Left colon (tissue), 2 donors: ENCODE measurements at regions of chr11 and their contacts with region 1.

Region 1: GRCh38 chr11:127395034-127395433 is 394.5 kb upstream of the KIRREL3 start:
- DNase-seq: no peak
- ATAC-seq: no peak

Region 2: DNA sequence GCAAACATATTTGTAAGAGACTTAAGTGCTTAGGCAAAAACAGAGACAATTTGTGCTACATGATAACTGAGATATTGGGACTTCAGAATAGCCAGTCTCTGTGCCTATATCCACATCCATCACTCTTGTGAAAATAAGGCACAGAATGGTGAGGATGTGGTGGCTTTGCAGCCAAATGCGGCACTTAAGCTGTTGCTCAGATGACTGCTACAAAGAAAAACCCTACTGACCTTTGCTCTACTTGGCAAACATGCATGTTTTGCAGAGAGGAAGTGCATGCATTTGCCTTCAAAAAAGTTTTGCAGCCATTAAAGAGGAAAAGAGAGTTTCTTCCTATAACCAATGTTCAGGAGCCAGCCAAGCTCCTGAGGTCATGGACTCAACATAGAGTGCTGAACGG is 280.5 kb after region 1 on chr11:
- intact Hi-C with region 1: loop called in 1 of 2 experiments (anchors 10 kb)
- DNase-seq: no peak
- ATAC-seq: no peak